Endothelial cell of umbilical vein (primary cell): ENCODE measurements at regions of chr14 and their contacts with region 1.

Region 1: DNA sequence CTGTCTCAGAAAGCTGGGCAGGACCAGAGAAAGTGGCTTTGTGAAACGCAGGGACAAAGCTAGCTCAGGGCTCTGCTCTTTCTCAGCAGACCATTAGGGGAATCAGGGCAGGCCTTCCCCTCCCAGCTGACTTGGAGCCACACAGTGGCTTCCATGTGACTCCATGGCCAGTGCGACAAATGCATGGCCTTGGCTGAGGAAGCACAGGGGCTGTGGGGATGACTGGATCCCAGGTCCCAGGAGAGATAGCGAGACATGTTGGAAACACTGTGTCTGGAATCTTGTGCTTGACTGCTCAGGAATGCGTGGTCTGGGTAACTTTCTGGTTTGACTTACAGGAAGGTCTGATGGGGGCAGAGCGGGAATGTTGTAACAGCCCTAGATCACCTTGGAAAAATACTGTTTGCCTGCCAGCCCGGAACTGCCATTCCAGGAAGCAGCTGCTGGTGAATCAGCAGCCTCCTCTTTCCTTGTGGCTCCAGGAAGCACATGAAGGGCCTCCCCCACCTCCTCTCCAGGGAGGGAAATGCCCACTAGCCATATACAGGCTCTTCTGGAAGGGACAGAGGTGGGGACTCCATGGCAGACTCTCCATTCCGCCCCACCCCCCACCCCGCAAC is 133.5 kb upstream of the HIF1A start:
- DNase-seq: peak; percentile 99
- H3K4me3 ChIP-seq: no peak overlapping the region
- H3K27ac ChIP-seq: peak overlapping the region; percentile 99
- H3K4me1 ChIP-seq: peaks cover 56% of the 10 kb centered on the region
- H3K27me3 ChIP-seq: no peaks in the 10 kb centered on the region
- CTCF ChIP-seq: no peak
- POLR2A ChIP-seq: peak; percentile 77

Region 2: DNA sequence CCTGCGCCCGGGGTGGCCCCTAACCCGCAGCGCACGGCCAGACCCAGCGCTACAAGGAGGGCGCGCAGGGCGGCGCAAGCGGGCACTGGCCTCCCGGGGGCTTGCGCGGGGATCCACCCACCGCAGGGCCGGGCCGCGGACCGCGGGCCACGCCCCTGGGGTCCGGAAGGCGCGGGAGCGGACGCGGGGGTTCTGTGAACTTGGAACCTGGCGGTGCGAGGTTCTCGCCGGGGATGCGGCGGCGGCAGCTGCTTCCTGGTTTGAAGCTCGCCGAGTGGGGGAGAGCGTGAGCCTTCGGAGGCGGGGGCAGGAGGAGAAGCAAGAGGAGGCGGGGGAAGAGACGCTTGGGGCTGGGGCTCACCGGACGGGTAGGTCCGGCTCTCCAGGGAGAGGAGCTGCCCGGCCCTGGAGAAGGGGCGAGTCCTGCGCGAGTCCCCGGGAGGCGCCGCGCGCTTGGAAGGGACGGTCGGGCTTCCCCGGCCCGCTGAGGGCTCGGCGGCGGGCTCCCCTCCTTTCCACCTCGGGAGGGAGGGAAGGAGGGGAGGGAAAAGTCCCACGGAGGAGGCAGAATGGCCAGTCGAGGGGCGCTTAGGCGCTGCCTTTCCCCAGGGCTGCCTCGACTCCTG is 240.3 kb before region 1 on chr14 and contains the start of gene PRKCH:
- CTCF ChIA-PET with region 1: no interaction called
- POLR2A ChIA-PET with region 1: no interaction called
- dilution Hi-C with region 1: no loop called
- intact Hi-C with region 1: loop called (anchors 1 kb)
- DNase-seq: peak; percentile 92
- H3K4me3 ChIP-seq: peak within 1 kb of the TSS; percentile 55 to 90 (median 68)
- H3K27ac ChIP-seq: peak within 1 kb of the TSS; percentile 66
- H3K4me1 ChIP-seq: peaks cover 23% of the 10 kb centered on the region
- H3K27me3 ChIP-seq: no peaks in the 10 kb centered on the region
- CTCF ChIP-seq: peak; percentile 12 to 40
- POLR2A ChIP-seq: peak; percentile 49
- total RNA-seq, gene PRKCH: 101 and 103 TPM in 2 replicates

Region 3: GRCh38 chr14:61503167-61503801 is 58.5 kb before region 1 on chr14:
- CTCF ChIA-PET with region 1: no interaction called
- POLR2A ChIA-PET with region 1: no interaction called
- dilution Hi-C with region 1: no loop called
- intact Hi-C with region 1: no loop called
- DNase-seq: peak; percentile 93
- H3K4me3 ChIP-seq: peak overlapping the region in 1 of 3 experiments; percentile 15
- H3K27ac ChIP-seq: peak overlapping the region; percentile 81
- H3K4me1 ChIP-seq: peaks cover 27% of the 10 kb centered on the region
- H3K27me3 ChIP-seq: no peaks in the 10 kb centered on the region
- CTCF ChIP-seq: no peak
- POLR2A ChIP-seq: no peak

Region 4: DNA sequence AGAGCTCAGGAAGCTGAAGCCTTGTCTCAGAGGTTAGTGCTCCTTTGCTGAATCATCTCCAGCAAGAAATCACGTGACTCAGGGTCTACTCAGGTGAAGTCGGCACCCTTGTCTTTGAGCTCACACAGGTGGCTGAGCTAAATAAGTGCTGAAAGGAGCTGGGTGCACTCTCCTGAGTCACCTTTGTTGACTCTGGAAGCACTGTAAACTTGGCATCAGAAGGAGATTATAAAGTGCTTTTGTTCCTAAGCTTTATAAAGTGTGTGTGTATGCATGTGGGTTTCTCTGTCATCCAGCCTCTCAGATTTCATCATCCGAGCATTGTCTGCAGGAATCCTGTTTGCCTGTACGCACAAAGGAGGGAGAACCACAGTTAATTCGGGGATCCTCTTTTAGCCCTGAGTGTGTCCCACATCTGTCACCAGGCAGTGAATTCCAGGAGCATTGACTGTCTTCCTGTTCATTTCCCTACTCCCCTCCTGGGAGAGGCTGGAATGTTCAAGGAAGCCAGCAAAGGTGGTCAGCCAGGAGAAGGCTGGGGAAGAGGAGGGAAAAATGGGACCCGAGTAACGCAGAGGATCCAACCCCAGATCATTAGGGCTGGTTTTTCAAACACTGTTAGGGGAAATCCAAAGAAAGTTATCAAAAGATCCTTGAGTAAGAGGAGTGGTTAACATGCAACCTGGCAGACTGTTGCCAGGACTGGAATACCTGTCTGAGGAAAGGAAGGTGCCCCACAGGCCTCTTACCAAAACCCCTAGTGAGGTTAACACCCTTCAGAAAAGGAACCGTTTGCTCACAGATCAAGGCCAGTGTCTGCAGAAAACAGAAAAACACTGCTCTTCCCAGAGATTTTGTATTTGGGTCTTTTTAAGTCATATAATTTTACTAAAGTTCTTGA is 24.0 kb before region 1 on chr14:
- CTCF ChIA-PET with region 1: interaction called, 5 read pairs
- POLR2A ChIA-PET with region 1: interaction called, 4 read pairs
- dilution Hi-C with region 1: no loop called
- intact Hi-C with region 1: loop called (anchors 1 kb)
- DNase-seq: peak; percentile 78
- H3K4me3 ChIP-seq: no peak overlapping the region
- H3K27ac ChIP-seq: peak overlapping the region; percentile 51
- H3K4me1 ChIP-seq: peaks cover 34% of the 10 kb centered on the region
- H3K27me3 ChIP-seq: no peaks in the 10 kb centered on the region
- CTCF ChIP-seq: no peak
- POLR2A ChIP-seq: no peak

Region 5: DNA sequence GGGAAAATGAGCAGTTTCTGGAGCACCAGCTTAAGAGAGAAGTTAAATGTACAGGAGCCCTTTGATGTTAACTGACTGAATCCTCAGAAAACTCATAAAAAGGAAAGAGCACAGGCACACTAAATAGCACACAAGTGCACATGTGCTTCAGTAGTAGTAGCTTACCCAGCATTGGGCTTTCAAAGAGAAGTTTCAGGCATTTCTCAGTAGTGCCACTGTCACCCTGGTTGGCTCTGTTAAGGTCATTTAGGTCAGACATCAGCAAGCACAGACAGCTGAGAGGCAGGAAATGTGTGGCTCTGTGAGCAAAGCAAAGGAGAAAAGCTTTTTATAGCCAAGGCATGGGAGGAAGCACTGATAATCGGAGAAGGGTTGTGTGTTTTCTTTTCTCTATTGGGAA is 37.2 kb after region 1 on chr14:
- CTCF ChIA-PET with region 1: interaction called, 4 read pairs
- POLR2A ChIA-PET with region 1: no interaction called
- dilution Hi-C with region 1: no loop called
- intact Hi-C with region 1: loop called (anchors 1 kb)
- DNase-seq: peak; percentile 85
- H3K4me3 ChIP-seq: no peak overlapping the region
- H3K27ac ChIP-seq: peak overlapping the region; percentile 47
- H3K4me1 ChIP-seq: peaks cover 17% of the 10 kb centered on the region
- H3K27me3 ChIP-seq: no peaks in the 10 kb centered on the region
- CTCF ChIP-seq: no peak
- POLR2A ChIP-seq: no peak

Region 6: GRCh38 chr14:61653507-61653906 is 91.7 kb after region 1 on chr14:
- CTCF ChIA-PET with region 1: interaction called, 5 read pairs
- POLR2A ChIA-PET with region 1: no interaction called
- dilution Hi-C with region 1: no loop called
- intact Hi-C with region 1: loop called (anchors 1 kb)
- DNase-seq: peak; percentile 92
- H3K4me3 ChIP-seq: no peak overlapping the region
- H3K27ac ChIP-seq: peak overlapping the region; percentile 14
- H3K4me1 ChIP-seq: peaks cover 19% of the 10 kb centered on the region
- H3K27me3 ChIP-seq: no peaks in the 10 kb centered on the region
- CTCF ChIP-seq: no peak
- POLR2A ChIP-seq: no peak

Region 7: GRCh38 chr14:61719344-61720293 is 157.9 kb after region 1 on chr14:
- CTCF ChIA-PET with region 1: interaction called, 8 read pairs
- POLR2A ChIA-PET with region 1: no interaction called
- dilution Hi-C with region 1: no loop called
- intact Hi-C with region 1: loop called (anchors 1 kb)
- DNase-seq: peak; percentile 55
- H3K4me3 ChIP-seq: no peak overlapping the region
- H3K27ac ChIP-seq: peak overlapping the region; percentile 14
- H3K4me1 ChIP-seq: peaks cover 17% of the 10 kb centered on the region
- H3K27me3 ChIP-seq: no peaks in the 10 kb centered on the region
- CTCF ChIP-seq: no peak
- POLR2A ChIP-seq: no peak

Region 8: DNA sequence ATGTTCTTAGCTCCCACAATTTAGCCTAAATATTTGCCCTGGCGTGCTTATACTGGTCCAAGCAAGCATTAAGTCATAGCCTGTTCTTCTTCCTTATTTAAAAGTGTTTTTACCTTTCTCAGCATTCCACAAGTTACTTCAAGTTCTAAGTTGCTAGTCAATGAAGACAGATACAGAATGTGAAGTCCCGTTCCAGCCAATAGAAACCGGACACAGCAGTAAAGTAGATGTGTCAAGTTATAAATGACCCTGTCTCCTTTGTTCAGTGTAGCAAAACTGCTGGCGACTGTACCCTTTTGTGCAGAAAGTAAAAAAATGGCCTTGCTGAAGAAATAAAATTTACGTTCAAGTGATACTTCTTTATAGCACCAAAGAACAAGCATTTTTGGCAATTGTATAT is 204.4 kb after region 1 on chr14:
- CTCF ChIA-PET with region 1: no interaction called
- POLR2A ChIA-PET with region 1: no interaction called
- dilution Hi-C with region 1: no loop called
- intact Hi-C with region 1: no loop called
- DNase-seq: peak; percentile 31
- H3K4me3 ChIP-seq: peak overlapping the region in 1 of 3 experiments; percentile 83
- H3K27ac ChIP-seq: no peak overlapping the region
- H3K4me1 ChIP-seq: peaks cover 29% of the 10 kb centered on the region
- H3K27me3 ChIP-seq: no peaks in the 10 kb centered on the region
- CTCF ChIP-seq: no peak
- POLR2A ChIP-seq: no peak

Region 9: DNA sequence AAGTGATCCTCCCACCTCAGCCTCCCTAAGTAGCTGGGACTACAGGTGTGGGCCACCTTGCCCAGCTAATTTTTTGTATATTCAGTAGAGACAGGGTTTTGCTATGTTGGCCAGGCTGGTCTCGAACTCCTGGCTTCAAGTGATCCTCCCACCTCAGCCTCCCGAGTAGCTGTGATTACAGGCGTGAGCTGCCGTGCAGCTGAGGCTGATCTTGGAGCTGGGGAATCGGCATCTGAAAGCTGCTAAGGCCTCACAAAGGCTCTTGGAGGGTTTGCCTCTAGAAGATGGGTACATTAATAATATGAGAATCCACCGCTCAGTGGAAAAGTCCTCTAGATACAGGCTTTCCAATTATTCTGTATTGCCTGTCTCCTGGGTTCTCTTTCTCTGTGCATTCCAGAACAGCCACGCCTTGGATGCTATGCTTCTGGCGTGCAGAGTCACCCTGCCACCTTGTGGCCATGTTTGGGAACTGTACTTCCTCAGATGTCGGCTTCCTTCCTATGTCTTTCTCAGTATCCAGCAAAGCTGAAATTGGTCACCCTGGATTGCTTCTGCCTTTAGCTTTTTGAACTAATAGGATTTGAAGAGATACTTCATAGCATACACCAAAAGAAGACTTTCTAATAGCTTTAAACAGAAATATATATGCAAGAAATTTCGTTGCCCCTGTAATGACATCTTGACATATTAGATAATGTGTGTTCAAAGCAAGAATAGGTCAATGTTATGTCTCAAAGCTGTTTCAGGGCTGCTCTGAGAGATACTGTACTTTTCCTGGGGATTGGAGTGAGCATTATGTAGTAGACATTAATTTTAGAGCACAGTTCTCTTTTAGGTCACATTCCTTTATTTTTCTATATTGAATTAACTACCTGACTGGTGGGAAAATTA is 275.8 kb after region 1 on chr14:
- CTCF ChIA-PET with region 1: interaction called, 4 read pairs
- POLR2A ChIA-PET with region 1: no interaction called
- dilution Hi-C with region 1: no loop called
- intact Hi-C with region 1: loop called (anchors 5 kb)
- DNase-seq: peak; percentile 84
- H3K4me3 ChIP-seq: no peak overlapping the region
- H3K27ac ChIP-seq: peak overlapping the region; percentile 72
- H3K4me1 ChIP-seq: peaks cover 34% of the 10 kb centered on the region
- H3K27me3 ChIP-seq: no peaks in the 10 kb centered on the region
- CTCF ChIP-seq: peak; percentile 85
- POLR2A ChIP-seq: no peak